MCF 10A (cell line): ENCODE measurements at regions of chr1 and their contacts with region 1.

Region 1: DNA sequence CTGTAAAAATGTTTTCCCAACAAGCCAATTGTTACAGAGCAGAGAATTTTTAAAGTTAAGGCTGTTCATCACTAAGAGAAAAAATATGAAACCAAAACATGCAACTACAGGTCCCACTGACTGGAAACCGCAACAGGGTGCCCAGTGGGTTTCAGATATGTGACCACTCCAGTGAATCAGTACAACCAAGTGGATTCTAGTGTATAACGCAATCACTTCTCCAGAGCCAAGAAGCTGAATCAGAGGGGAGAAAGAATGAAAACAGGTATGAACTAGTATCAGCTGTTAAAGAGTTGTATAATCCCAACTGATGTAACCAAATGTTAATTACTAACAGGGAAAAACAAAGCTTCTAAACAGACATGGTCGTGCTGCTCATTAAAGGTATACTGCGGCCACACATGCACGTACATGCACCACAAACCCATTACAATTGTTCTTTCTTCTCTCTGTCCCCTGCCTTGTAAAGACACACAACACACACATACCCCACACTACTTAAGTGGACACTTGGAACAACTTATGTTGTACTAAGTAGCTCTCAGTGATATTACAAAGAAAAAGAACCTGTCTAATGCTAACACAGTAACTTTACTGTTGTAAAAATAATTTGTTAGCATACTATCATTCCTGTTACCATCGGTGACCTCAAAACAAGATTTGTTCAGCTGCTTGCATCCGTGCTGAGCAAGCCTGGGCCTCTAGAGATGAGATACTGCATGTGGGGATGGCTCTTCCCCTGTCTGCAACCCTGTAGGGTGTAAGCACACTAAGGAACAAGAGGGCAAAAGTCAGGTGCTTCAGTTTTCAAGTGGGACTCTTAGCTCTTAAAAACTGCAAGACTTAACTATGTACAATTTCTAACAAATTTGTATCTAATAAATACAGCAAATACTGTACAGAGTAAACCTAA is 74.2 kb downstream of the PTPN14 start:
- DNase-seq: peak; percentile 100
- H3K4me3 Mint-ChIP-seq: peak overlapping the region; percentile 65
- H3K27ac Mint-ChIP-seq: peak overlapping the region; percentile 88
- H3K4me1 Mint-ChIP-seq: peaks cover 68% of the 10 kb centered on the region
- H3K27me3 Mint-ChIP-seq: no peaks in the 10 kb centered on the region
- CTCF ChIP-seq: no peak

Region 2: DNA sequence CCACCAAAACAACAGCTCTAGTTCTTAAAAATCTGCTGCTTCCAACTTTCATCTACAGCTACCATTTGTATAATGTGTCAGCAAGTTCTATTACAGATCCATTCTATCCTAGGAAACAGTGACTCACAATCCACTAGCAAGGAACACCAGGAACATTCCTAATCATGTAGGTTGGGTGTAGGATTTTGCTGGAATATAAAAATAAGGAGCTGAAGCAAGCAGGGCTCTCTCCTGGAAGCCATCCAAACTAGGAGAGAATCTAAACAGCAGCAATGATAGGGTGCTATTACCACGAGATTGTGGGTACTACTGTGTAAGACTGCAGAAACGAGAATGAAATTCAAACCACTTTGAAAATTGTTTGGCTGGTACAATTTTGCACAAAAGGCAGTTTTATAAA is 60.8 kb before region 1 on chr1:
- CTCF ChIA-PET with region 1: interaction called, 19 read pairs
- POLR2A ChIA-PET with region 1: interaction called, 112 read pairs
- intact Hi-C with region 1: loop called (anchors 10 kb)
- DNase-seq: peak; percentile 80
- H3K4me3 Mint-ChIP-seq: no peak overlapping the region
- H3K27ac Mint-ChIP-seq: peak overlapping the region; percentile 69
- H3K4me1 Mint-ChIP-seq: peaks cover 67% of the 10 kb centered on the region
- H3K27me3 Mint-ChIP-seq: no peaks in the 10 kb centered on the region
- CTCF ChIP-seq: no peak

Region 3: DNA sequence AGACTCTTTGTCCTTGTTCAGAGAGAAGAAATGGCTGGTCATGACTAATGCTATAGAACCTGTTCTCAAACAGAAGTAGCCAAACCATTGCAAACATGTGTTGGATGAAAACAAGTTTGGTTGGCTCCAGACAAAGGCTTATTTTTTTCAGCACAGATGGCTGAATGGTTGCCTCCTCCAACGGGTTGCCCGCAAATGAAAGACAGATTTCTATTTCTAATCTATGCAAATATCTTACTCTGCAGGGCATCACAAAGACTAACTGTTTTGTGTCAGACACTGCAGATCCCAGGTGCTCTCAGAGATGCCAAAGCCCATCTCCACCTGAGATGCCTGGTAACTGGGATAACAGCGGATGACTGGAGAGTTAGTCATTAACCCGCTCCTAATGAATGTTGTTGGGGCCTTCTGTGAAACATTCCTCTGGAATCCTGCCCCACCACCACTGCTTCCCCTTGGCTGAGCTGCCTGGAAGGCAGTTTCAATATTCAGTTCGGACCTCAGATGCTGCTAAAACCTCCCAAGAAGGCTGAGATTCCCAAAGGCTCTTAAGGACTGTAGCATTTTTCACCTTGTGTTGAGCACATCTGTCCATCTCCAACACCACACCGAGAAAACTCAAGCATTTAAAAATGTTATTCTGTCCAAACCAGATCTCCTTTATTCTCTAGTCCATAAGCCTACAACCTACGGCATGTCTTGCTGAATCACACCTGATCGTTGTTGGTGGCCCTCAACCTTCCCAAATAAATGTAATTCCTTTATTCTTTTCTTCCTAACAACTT is 30.2 kb before region 1 on chr1:
- CTCF ChIA-PET with region 1: interaction called, 61 read pairs
- POLR2A ChIA-PET with region 1: interaction called, 843 read pairs
- intact Hi-C with region 1: loop called (anchors 2 kb)
- DNase-seq: peak; percentile 97
- H3K4me3 Mint-ChIP-seq: peak overlapping the region; percentile 26
- H3K27ac Mint-ChIP-seq: peak overlapping the region; percentile 81
- H3K4me1 Mint-ChIP-seq: peaks cover 59% of the 10 kb centered on the region
- H3K27me3 Mint-ChIP-seq: no peaks in the 10 kb centered on the region
- CTCF ChIP-seq: no peak

Region 4: DNA sequence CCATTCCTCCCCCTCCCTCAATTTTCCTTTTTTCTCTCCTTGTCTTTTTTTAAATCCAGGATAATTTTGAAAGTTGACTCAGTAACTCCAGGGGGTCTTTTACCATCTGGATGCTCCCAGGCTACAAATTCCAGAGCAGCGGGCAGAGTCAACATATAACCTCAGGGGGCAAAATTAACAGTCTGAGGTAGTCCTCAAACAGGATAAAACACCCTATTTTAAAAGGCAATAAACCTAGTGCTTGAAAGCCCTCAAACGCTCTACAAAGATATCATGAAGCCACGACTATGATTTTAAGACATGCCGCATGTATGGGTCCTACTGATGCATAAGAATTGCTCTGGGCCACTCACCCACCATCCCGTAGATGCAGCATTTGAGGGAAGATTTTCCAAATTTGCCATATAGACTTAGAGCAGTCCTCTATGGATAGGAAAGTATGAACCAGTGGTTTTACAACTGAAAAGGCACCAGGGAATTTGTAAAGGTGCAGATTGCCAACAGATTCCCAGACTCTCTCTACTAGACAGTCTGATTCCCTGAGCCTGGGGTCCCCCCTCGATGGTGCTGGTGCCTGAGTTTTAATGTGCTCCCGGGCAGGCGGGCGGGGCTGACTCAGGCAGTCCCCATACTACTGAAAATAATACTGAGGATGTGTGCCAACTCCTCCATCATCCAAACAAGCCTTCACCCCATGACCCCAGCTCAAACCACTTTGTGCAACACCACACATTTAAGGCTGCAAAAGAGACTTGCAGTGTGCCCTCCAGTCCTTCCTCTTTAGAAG is 37.0 kb after region 1 on chr1:
- CTCF ChIA-PET with region 1: interaction called, 5 read pairs
- POLR2A ChIA-PET with region 1: interaction called, 13 read pairs
- intact Hi-C with region 1: no loop called
- DNase-seq: peak; percentile 71
- H3K4me3 Mint-ChIP-seq: no peak overlapping the region
- H3K27ac Mint-ChIP-seq: peak overlapping the region; percentile 78
- H3K4me1 Mint-ChIP-seq: peaks cover 75% of the 10 kb centered on the region
- H3K27me3 Mint-ChIP-seq: no peaks in the 10 kb centered on the region
- CTCF ChIP-seq: no peak

Region 5: DNA sequence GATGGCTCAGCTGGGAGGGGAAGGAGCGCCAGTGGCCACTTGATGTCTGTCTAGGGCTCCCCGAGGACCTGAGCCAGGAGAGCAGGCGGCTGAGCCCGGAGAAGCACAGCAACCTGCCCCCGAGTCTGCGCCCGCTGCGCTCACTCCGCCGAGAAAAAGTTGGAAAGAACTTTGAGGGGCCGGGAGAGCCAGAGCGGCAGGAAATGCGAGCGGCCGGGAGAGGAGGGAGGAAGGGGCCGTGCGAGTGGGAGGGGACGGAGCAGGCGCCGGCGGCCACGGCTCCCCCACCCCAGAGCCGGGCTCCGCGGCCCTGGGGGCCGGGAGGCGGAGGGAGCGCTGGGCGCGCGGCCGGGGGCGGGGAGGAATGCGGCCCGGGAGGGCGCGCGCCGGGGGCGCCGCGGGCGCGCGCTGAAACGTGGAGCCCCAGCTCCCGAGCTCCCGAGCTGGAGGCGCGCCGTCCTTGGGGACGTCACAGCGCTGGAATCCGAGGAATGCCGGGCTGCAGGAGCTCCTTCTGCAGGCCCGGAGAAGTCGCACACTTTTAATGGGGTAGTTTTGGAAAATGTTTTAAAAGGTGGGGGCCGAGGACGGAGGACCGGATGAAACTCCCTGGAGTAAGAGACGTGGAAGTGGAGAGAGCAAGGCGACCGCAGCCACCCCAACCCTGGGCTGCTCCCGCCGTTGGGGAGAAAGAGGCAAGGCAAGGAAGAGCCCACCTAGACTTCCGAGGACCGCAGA is 74.4 kb after region 1 on chr1 and contains the start of gene PTPN14:
- CTCF ChIA-PET with region 1: interaction called, 77 read pairs
- POLR2A ChIA-PET with region 1: interaction called, 881 read pairs
- intact Hi-C with region 1: loop called (anchors 1 kb)
- DNase-seq: peak; percentile 97
- H3K4me3 Mint-ChIP-seq: peak within 1 kb of the TSS; percentile 89
- H3K27ac Mint-ChIP-seq: peak within 1 kb of the TSS; percentile 90
- H3K4me1 Mint-ChIP-seq: peaks cover 39% of the 10 kb centered on the region
- H3K27me3 Mint-ChIP-seq: no peaks in the 10 kb centered on the region
- CTCF ChIP-seq: peak; percentile 77
- total RNA-seq, gene PTPN14: 240 and 243 TPM in 2 replicates

Region 6: DNA sequence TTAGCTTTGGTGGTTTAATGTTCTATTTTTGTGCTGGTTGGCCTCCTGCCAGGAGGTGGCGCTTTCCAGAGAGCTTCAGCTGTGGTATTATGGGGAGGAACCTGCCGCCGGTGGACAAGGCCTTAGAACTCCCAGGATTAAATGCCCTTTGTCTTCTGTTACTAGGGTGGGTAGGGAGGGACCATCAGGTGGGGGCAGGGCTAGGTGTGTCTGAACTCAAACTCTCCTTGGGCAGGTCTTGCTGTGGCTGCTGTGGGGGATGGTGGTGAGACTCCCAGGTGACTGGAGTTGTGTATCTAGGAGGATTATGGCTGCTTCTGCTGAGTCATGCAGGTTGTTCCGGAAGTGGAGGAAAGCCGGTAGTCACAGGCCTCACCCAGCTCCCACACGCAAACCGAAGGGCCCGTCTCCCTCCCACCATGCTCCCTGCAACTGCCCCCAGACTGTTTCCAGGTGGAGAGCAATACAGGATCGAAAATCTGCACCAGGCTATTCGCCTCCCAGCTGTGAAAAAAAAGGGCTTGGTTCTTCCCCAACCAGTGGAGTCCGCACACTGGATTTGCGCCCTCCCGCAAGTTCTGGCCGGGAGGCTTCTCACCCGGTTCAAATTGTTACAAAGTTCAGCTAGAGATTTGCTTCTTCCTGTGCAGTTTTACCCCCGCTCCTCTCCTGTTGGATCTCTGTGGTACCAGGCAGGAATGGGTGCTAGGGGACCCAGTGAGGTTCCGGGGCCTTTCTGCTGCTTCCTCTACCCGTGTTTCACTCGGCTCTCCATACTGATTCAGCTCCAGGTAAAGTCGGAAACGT is 346.3 kb after region 1 on chr1:
- CTCF ChIA-PET with region 1: no interaction called
- POLR2A ChIA-PET with region 1: no interaction called
- intact Hi-C with region 1: no loop called
- DNase-seq: peak; percentile 14
- H3K4me3 Mint-ChIP-seq: no peak overlapping the region
- H3K27ac Mint-ChIP-seq: no peak overlapping the region
- H3K4me1 Mint-ChIP-seq: no peaks in the 10 kb centered on the region
- H3K27me3 Mint-ChIP-seq: no peaks in the 10 kb centered on the region
- CTCF ChIP-seq: no peak

Region 7: GRCh38 chr1:215566556-215567490 is 1089.6 kb after region 1 on chr1 and contains the start of gene KCTD3:
- CTCF ChIA-PET with region 1: no interaction called
- POLR2A ChIA-PET with region 1: interaction called, 15 read pairs
- intact Hi-C with region 1: no loop called
- DNase-seq: peak; percentile 90
- H3K4me3 Mint-ChIP-seq: peak within 1 kb of the TSS; percentile 98
- H3K27ac Mint-ChIP-seq: peak within 1 kb of the TSS; percentile 99
- H3K4me1 Mint-ChIP-seq: peaks cover 28% of the 10 kb centered on the region
- H3K27me3 Mint-ChIP-seq: no peaks in the 10 kb centered on the region
- CTCF ChIP-seq: no peak
- total RNA-seq, gene KCTD3: 78.9 and 90.3 TPM in 2 replicates